HepG2 (cell line): ENCODE measurements at regions of chr18 and their contacts with region 1.

Region 1: DNA sequence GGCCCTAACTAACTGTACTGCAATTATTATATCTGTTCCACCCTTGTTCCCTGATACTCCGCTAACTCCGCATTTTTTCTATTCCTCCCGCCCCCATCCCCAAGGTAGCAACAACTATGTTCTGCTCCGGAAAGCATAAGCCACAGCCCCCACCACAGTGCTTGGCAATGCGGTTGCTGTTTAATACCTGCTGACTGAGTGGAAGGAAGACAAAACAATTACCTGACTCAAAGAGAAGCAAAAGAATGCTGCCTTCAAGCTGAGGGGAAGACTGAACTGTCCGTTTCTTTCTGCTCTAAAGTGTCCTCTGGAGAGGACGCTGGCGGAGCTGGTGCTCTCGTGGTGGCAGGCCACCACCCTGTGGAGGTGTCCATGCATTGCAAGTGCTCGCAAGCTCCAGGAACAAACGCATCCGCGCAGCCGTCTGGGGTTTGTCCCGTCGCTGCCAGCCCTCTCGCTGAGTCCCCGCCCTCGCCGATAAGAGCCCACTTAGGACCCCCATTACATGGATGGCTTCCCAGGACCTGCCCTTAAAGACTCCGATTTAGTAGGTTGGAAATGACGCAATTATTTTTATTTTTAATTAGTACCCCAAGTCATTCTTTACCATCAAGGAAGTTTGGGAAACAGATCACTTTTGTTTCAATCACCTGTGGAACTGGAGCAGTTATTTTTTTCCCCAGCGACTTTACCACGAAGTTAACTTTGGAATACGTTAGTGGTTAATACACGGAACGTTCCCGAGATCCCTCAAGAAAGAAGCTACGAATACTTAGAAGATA is 1.6 kb upstream of the MYL12A start:
- DNase-seq: peak; percentile 81
- ATAC-seq: peak; percentile 80
- H3K4me3 ChIP-seq: peak overlapping the region; percentile 66 to 93 (median 92)
- H3K27ac ChIP-seq: peak overlapping the region; percentile 93
- H3K4me1 ChIP-seq: peaks cover 45% of the 10 kb centered on the region
- H3K27me3 ChIP-seq: no peaks in the 10 kb centered on the region; a peak in 2 of 5 replicates
- CTCF ChIP-seq: peak; percentile 99
- EP300 ChIP-seq: no peak
- POLR2A ChIP-seq: peak in 1 of 2 experiments; percentile 41; a peak in 3 of 4 replicates
- RAD21 ChIP-seq: peak; percentile 99

Region 2: GRCh38 chr18:2932247-2933181 is 313.5 kb before region 1 on chr18:
- CTCF ChIA-PET with region 1: interaction called, 15 read pairs
- POLR2A ChIA-PET with region 1: interaction called, 16 read pairs
- in situ Hi-C with region 1: loop called (anchors 5 kb)
- intact Hi-C with region 1: loop called (anchors 2 kb)
- DNase-seq: peak; percentile 62
- ATAC-seq: peak; percentile 77
- H3K4me3 ChIP-seq: no peak overlapping the region
- H3K27ac ChIP-seq: peak overlapping the region; percentile 24
- H3K4me1 ChIP-seq: peaks cover 17% of the 10 kb centered on the region
- H3K27me3 ChIP-seq: no peaks in the 10 kb centered on the region
- CTCF ChIP-seq: peak; percentile 69
- EP300 ChIP-seq: no peak
- POLR2A ChIP-seq: peak in 1 of 2 experiments; percentile 14; a peak in 1 of 4 replicates
- RAD21 ChIP-seq: peak; percentile 45; the same call in 1 of the 2 replicates

Region 3: GRCh38 chr18:2985628-2986027 is 260.4 kb before region 1 on chr18:
- CTCF ChIA-PET with region 1: no interaction called
- POLR2A ChIA-PET with region 1: interaction called, 40 read pairs
- in situ Hi-C with region 1: no loop called
- intact Hi-C with region 1: loop called (anchors 1 kb)
- DNase-seq: peak; percentile 50
- ATAC-seq: no peak
- H3K4me3 ChIP-seq: no peak overlapping the region
- H3K27ac ChIP-seq: peak overlapping the region; percentile 81
- H3K4me1 ChIP-seq: peaks cover 99% of the 10 kb centered on the region
- H3K27me3 ChIP-seq: no peaks in the 10 kb centered on the region
- CTCF ChIP-seq: peak; percentile 36; the same call in 1 of the 2 replicates
- EP300 ChIP-seq: no peak
- POLR2A ChIP-seq: no peak
- RAD21 ChIP-seq: no peak

Region 4: GRCh38 chr18:3062798-3063680 is 183.0 kb before region 1 on chr18:
- CTCF ChIA-PET with region 1: no interaction called
- POLR2A ChIA-PET with region 1: interaction called, 19 read pairs
- in situ Hi-C with region 1: no loop called
- intact Hi-C with region 1: loop called (anchors 2 kb)
- DNase-seq: peak; percentile 72
- ATAC-seq: peak; percentile 81
- H3K4me3 ChIP-seq: peak overlapping the region; percentile 6 to 55 (median 18); a peak in 4 of 6 replicates
- H3K27ac ChIP-seq: peak overlapping the region; percentile 92
- H3K4me1 ChIP-seq: peaks cover 60% of the 10 kb centered on the region
- H3K27me3 ChIP-seq: no peaks in the 10 kb centered on the region
- CTCF ChIP-seq: peak; percentile 90
- EP300 ChIP-seq: peak in 1 of 2 experiments; percentile 25; a peak in 1 of 4 replicates
- POLR2A ChIP-seq: no peak
- RAD21 ChIP-seq: peak; percentile 80

Region 5: GRCh38 chr18:3151399-3152264 is 94.4 kb before region 1 on chr18:
- CTCF ChIA-PET with region 1: interaction called, 16 read pairs
- POLR2A ChIA-PET with region 1: interaction called, 16 read pairs
- in situ Hi-C with region 1: loop called (anchors 5 kb)
- intact Hi-C with region 1: loop called (anchors 1 kb)
- DNase-seq: peak; percentile 36
- ATAC-seq: no peak
- H3K4me3 ChIP-seq: peak overlapping the region in 1 of 3 experiments; percentile 24; a peak in 1 of 6 replicates
- H3K27ac ChIP-seq: no peak overlapping the region
- H3K4me1 ChIP-seq: peaks cover 66% of the 10 kb centered on the region
- H3K27me3 ChIP-seq: no peaks in the 10 kb centered on the region
- CTCF ChIP-seq: peak; percentile 63
- EP300 ChIP-seq: no peak
- POLR2A ChIP-seq: no peak
- RAD21 ChIP-seq: peak; percentile 41; the same call in 1 of the 2 replicates

Region 6: DNA sequence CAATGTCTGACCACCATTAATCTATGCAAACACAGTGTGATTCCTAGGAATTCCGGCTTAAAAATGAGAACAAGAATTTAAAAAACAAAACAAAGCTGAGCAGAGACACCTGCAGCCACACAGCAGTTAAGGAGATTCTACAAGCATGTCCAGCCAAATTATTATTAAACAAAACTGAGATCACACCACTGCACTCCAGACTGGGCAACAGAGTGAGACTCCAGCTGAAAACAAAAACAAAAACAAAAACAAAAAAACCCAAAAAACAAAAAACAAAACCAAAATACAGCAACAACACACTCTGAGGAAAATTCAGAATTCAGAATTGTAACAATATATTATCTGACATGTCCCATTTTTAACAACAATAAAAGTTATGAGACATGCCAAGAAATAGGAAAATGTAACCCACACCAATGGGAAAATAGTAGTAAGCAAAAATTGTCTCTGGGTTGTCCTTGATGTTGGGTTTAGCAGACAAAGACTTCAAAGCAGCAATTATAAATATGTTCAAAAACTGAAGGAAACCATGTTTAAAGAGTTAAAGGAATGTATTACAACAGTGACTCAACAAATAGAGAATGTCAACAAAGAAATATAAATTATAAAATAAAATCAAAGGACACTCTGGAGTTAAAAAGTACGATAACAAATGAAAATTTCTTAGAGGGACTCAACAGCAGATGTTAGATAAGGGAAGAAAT is 46.0 kb before region 1 on chr18:
- CTCF ChIA-PET with region 1: no interaction called
- POLR2A ChIA-PET with region 1: interaction called, 4 read pairs
- in situ Hi-C with region 1: no loop called
- intact Hi-C with region 1: loop called (anchors 5 kb)
- DNase-seq: peak; percentile 56
- ATAC-seq: no peak
- H3K4me3 ChIP-seq: no peak overlapping the region
- H3K27ac ChIP-seq: no peak overlapping the region
- H3K4me1 ChIP-seq: peaks cover 23% of the 10 kb centered on the region
- H3K27me3 ChIP-seq: no peaks in the 10 kb centered on the region
- CTCF ChIP-seq: no peak
- EP300 ChIP-seq: 0 out of 4 replicates have a peak, but pooled peaks of 1 of the 2 experiments have one; percentile 6
- POLR2A ChIP-seq: no peak
- RAD21 ChIP-seq: no peak

Region 7: DNA sequence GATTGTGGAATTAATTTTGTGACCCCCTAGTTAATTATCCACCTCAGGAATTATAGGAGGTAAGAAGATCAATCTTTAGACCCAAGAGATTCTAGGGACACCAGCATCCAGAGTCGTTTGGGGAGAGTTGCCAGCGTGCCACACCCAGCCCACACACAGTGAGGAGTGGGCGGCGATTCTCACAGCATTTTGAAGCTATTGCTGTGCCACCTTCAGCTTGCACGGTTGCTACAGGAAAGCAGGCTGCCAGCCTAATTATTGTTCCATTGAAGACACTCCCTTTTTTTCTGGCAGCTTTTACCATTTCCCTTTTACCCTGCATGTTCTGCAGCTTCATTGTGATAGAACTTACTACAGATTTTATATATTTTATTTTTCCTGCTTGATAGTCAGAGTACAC is 11.6 kb before region 1 on chr18:
- CTCF ChIA-PET with region 1: interaction called, 3 read pairs
- POLR2A ChIA-PET with region 1: interaction called, 54 read pairs
- in situ Hi-C with region 1: no loop called
- intact Hi-C with region 1: no loop called
- DNase-seq: no peak
- ATAC-seq: peak; percentile 8
- H3K4me3 ChIP-seq: peak overlapping the region in 1 of 3 experiments; percentile 8; a peak in 1 of 6 replicates
- H3K27ac ChIP-seq: peak overlapping the region; percentile 95
- H3K4me1 ChIP-seq: peaks cover 66% of the 10 kb centered on the region
- H3K27me3 ChIP-seq: no peaks in the 10 kb centered on the region
- CTCF ChIP-seq: no peak
- EP300 ChIP-seq: no peak
- POLR2A ChIP-seq: no peak
- RAD21 ChIP-seq: no peak

Region 8: DNA sequence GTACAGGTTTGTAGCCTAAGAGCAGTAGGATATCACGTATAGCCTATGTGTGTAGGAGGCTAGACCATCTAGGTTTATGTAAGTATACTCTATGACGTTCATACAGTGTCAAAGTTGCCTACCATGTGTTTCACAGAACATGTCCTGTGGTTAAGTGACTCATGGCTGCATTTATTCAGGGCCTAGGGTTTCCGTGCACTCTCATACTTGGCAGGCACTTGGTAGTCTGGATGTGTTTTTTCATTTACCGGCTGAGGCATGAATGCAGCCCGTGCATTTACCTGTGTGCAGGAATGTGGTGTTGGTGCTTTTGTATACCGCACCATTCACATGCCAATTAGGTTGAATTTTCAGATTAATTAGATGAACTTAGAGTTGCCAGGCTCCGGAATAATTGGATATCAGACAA is 59.3 kb after region 1 on chr18:
- CTCF ChIA-PET with region 1: no interaction called
- POLR2A ChIA-PET with region 1: no interaction called
- in situ Hi-C with region 1: no loop called
- intact Hi-C with region 1: no loop called
- DNase-seq: no peak
- ATAC-seq: no peak
- H3K4me3 ChIP-seq: no peak overlapping the region
- H3K27ac ChIP-seq: no peak overlapping the region
- H3K4me1 ChIP-seq: no peaks in the 10 kb centered on the region
- H3K27me3 ChIP-seq: peaks cover 1 to 5% of the 10 kb centered on the region in 2 experiments; a peak in 3 of 5 replicates
- CTCF ChIP-seq: no peak
- EP300 ChIP-seq: no peak
- POLR2A ChIP-seq: no peak
- RAD21 ChIP-seq: no peak